ENCODE measurements at regions of chr10 and their contacts with region 1.

Region 1: DNA sequence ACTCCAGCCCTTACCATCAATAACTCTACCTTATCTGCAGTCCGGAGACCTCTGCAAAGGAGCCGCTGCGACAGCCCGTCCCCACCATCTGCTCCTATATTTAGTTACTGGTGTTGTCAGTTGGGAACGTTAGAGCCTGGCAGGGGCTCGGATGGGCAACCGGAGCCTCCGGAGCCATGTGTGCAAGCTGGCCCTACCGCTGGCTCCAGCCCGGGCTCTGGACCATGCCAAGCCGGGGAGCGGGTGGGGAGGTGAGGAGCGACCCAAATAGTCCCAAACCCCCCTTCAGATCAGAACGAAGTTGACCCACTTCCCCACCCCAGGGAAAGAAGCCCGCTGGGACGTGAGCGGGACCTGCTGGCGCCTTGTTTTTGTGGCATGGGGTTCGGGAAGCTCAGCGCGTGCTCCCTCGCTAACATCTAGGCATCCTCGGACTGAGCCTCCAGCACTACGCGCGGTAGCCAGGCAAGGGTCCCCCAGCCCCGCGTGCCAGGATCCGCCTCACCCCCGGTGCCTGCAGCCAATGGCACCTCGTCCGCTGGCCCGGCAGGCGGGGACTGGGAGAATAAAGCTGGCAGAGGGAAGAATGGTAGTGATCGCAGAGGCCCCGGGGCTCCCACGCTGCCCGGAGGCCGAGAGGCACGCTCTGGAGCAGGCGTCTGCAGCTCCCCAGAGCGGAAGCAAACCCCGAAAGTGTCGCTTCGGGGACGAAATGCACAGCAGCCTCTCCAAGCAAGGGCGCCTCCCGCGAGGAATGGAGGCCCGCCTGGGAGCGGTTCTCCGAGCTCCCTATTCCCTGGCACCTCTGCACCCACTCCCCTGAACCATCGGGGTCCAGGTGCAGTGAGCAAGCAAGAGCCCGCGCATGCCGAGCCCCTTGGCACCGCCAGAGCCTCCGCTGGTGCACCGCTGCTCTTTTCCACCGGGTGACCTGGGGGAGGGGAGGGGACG is 679 bp downstream of the LRRC20 start:
- DNase-seq: peak; percentile 51
- H3K4me3 Mint-ChIP-seq: peak overlapping the region; percentile 83
- H3K27ac Mint-ChIP-seq: no peak overlapping the region
- H3K4me1 Mint-ChIP-seq: peaks cover 16% of the 10 kb centered on the region
- H3K27me3 Mint-ChIP-seq: no peaks in the 10 kb centered on the region

Region 2: DNA sequence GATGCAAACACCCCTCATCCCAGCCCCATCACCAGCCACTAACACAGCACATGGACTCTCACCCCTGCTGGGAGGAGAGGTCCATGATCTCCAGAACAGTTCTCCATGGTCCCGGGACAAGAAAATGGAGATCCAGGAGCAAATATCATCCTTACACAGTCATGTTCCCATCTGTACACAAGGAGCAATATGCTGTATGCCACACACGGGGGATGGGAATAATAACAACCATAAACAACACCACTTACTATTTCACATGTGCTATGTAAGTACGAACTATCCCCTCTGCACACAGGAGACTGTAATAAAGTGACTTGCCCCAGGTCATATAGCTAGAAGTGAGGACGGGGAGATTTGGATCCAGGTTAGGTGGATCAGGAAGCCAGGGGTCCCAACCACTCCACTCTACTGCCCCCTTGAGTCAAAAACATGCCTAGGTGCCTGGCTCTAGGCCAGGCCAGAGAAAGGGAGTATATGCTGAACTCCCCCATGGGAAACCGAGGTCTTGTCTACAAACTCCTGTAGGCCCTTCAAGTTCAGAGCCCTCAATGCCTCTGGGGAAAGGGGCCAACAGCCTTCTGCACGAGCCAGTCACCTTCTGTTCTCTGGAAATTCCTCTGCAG is 33.4 kb before region 1 on chr10:
- CTCF ChIA-PET with region 1: no interaction called
- POLR2A ChIA-PET with region 1: no interaction called
- DNase-seq: peak; percentile 30
- H3K4me3 Mint-ChIP-seq: no peak overlapping the region
- H3K27ac Mint-ChIP-seq: no peak overlapping the region
- H3K4me1 Mint-ChIP-seq: no peaks in the 10 kb centered on the region
- H3K27me3 Mint-ChIP-seq: no peaks in the 10 kb centered on the region

Region 3: GRCh38 chr10:70396140-70396539 is 14.4 kb after region 1 on chr10:
- CTCF ChIA-PET with region 1: no interaction called
- POLR2A ChIA-PET with region 1: no interaction called
- DNase-seq: no peak
- H3K4me3 Mint-ChIP-seq: no peak overlapping the region
- H3K27ac Mint-ChIP-seq: no peak overlapping the region
- H3K4me1 Mint-ChIP-seq: no peaks in the 10 kb centered on the region
- H3K27me3 Mint-ChIP-seq: peaks cover 8% of the 10 kb centered on the region

Region 4: DNA sequence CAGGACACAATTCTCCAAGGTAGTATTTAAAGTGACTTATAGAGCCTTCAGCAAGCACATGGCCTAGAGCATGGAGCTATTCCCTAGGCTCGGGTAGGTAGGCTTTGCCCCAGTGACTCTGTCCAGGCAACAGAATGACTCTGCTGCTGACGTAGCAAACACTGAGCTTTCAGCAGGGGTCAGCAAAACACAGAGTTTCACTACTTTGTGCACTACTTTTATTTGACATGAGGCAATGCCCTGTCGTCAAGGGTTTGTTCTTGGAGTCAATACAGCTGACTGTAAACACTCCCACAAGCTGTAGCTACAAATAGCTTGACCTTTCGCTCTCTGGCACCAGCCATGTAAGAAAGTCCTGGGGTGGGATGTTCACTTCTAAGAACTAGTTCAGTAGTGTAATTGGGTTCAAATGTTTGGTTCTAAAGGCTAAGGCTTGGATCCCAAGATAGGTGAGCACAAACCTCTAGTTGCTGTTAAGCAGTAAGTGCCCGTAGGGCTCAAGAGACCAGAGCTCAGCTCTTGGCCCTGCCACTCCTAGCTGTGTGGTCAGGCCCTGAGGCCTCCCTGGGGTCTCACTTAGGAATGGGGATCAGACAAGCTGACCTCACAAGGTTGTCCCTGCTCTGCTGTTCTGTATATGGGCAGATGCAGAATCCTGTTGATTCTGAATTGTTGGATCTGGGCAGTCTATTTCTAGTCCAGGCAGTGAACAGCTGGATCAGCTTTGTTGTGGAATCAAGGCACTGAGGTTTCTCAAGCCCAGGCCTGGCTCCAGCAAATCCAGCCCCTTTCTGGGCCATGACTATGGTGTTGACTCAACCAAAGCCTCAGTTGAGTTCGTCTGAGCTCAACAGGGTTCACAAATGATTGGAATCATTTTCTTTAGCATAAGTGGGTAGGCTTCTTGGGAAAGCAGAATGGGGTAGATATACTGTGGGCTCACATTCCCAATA is 49.0 kb after region 1 on chr10:
- CTCF ChIA-PET with region 1: interaction called, 29 read pairs
- POLR2A ChIA-PET with region 1: interaction called, 9 read pairs
- DNase-seq: no peak
- H3K4me3 Mint-ChIP-seq: no peak overlapping the region
- H3K27ac Mint-ChIP-seq: no peak overlapping the region
- H3K4me1 Mint-ChIP-seq: peaks cover 39% of the 10 kb centered on the region
- H3K27me3 Mint-ChIP-seq: no peaks in the 10 kb centered on the region